Calu3 (cell line): ENCODE measurements at regions of chr5 and their contacts with region 1.

Region 1: DNA sequence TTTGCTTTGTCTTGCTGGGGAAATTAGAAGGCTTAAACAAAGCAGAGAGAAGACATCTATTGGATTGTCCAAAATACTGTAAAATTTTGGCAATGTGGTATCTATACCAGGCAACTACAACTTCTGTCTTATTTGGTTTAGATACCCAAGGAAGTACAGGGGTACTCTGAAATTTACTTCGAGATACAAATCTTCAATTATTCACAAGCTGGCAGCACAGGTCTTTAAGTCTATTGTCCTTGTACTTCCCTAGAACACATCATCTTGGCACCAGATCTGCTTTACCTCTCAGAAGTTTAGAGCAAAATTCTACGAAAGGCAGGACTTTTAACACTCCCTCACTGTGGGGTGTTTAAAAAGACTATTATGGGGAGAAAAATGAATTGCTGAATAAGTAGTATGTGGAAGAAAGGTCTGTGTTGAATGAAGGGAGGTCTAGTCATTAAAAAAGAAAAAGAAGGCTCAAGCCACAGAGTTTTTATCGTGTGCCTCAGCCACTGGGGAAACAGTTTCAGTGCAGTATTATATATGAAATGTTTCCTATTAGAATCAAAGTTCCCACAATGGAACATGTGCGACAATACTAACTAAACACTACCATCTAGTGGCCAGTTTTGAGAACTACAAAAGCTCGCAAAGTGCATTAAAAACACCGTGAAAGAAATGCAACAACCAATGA is 93.7 kb downstream of the PDE4D start:
- DNase-seq: peak; percentile 46
- H3K4me3 Mint-ChIP-seq: no peak overlapping the region
- H3K27ac Mint-ChIP-seq: no peak overlapping the region
- H3K4me1 Mint-ChIP-seq: no peaks in the 10 kb centered on the region
- H3K27me3 Mint-ChIP-seq: no peaks in the 10 kb centered on the region
- CTCF ChIP-seq: peak; percentile 72

Region 2: GRCh38 chr5:59390074-59390659 is 409.6 kb before region 1 on chr5:
- CTCF ChIA-PET with region 1: interaction called, 7 read pairs
- intact Hi-C with region 1: loop called (anchors 1 kb)
- DNase-seq: peak; percentile 20
- H3K4me3 Mint-ChIP-seq: no peak overlapping the region
- H3K27ac Mint-ChIP-seq: no peak overlapping the region
- H3K4me1 Mint-ChIP-seq: no peaks in the 10 kb centered on the region
- H3K27me3 Mint-ChIP-seq: no peaks in the 10 kb centered on the region
- CTCF ChIP-seq: peak; percentile 37

Region 3: GRCh38 chr5:59587489-59588337 is 212.1 kb before region 1 on chr5:
- CTCF ChIA-PET with region 1: interaction called, 3 read pairs
- intact Hi-C with region 1: loop called (anchors 5 kb)
- DNase-seq: peak; percentile 77
- H3K4me3 Mint-ChIP-seq: peak overlapping the region; percentile 74
- H3K27ac Mint-ChIP-seq: peak overlapping the region; percentile 64
- H3K4me1 Mint-ChIP-seq: peaks cover 58% of the 10 kb centered on the region
- H3K27me3 Mint-ChIP-seq: no peaks in the 10 kb centered on the region
- CTCF ChIP-seq: no peak

Region 4: DNA sequence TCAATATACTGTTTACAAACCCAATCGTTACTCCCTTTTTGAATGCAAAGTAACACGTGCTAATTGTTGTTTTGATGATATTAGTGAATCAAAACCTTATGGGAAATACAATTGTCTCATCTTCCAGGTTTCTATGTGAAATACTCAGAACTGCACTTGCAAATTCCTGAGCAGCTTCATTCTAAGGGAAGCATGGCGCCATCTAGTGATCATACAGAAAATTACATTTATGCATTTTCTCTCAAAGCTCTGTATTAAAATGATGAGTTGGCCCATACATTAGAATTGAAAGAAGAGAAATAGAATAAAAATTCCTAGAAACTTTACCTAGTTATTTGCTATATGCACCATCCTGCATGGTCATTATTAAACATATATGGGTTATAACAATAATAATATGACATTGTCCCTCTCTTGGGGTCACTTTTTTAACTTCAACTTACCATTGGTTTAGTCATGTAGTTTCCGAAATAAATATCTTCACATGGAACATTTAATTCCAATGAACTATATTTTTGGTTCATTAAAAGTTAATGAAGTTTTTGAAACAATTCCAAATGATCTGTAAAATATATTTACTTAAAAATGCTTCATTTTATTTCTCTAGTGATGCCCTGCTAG is 126.3 kb before region 1 on chr5:
- CTCF ChIA-PET with region 1: interaction called, 8 read pairs
- intact Hi-C with region 1: loop called (anchors 1 kb)
- DNase-seq: peak; percentile 9
- H3K4me3 Mint-ChIP-seq: no peak overlapping the region
- H3K27ac Mint-ChIP-seq: no peak overlapping the region
- H3K4me1 Mint-ChIP-seq: no peaks in the 10 kb centered on the region
- H3K27me3 Mint-ChIP-seq: no peaks in the 10 kb centered on the region
- CTCF ChIP-seq: peak; percentile 63

Region 5: GRCh38 chr5:59759600-59760351 is 40.0 kb before region 1 on chr5:
- CTCF ChIA-PET with region 1: interaction called, 4 read pairs
- intact Hi-C with region 1: loop called (anchors 2 kb)
- DNase-seq: peak; percentile 63
- H3K4me3 Mint-ChIP-seq: peak overlapping the region; percentile 71
- H3K27ac Mint-ChIP-seq: peak overlapping the region; percentile 100
- H3K4me1 Mint-ChIP-seq: peaks cover 30% of the 10 kb centered on the region
- H3K27me3 Mint-ChIP-seq: no peaks in the 10 kb centered on the region
- CTCF ChIP-seq: no peak